ENCODE measurements at regions of chr14 and their contacts with region 1.

Region 1: DNA sequence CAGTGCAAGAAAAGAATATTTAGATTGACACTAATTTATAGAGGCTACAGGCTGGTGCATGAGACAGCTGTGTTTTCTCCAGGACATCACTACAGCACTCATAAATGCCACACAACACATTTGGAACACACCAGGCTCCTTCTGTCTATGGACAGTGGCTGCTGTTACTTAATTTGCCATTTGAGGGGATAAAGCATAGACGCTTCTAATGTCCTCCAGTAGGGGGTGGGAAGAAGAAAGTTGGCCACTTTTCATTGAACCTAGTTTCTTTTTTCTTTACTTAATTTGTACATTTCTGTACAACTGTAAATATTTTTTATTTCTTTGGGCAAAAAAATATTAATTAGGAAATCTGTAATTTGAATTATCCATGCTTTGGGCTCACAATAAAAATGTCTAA is 12.4 kb upstream of the RTN1 start:
- DNase-seq: no peak
- ATAC-seq: no peak
- H3K4me3 ChIP-seq: no peak overlapping the region
- H3K4me3 Mint-ChIP-seq: no peak overlapping the region
- H3K27ac ChIP-seq: no peak overlapping the region
- H3K27ac Mint-ChIP-seq: no peak overlapping the region
- H3K4me1 ChIP-seq: no peaks in the 10 kb centered on the region
- H3K4me1 Mint-ChIP-seq: no peaks in the 10 kb centered on the region
- H3K27me3 ChIP-seq: peaks cover 0 to 5% of the 10 kb centered on the region in 2 experiments
- H3K27me3 Mint-ChIP-seq: peaks cover 23% of the 10 kb centered on the region
- CTCF ChIP-seq: no peak

Region 2: DNA sequence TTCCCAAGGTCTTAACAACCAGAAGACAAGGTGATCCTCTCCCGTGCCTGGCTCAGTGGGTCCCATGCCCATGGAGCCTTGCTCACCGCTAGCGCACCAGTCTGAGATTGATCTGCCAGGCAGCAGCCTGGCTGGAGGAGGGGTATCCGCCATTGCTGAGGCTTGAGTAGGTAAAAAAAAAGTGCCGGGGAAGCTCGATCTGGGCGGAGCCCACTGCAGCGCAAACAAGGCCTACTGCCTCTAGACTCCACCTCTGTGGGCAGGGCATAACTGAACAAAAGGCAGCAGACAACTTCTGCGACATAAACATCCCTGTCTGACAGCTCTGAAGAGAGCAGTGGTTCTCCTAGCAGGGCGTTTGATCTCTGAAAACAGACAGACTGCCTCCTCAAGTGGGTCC is 499.0 kb after region 1 on chr14:
- CTCF ChIA-PET with region 1: no interaction called
- POLR2A ChIA-PET with region 1: no interaction called
- intact Hi-C with region 1: loop called in 1 of 2 experiments (anchors 10 kb)
- DNase-seq: no peak
- ATAC-seq: no peak
- H3K4me3 ChIP-seq: no peak overlapping the region
- H3K4me3 Mint-ChIP-seq: no peak overlapping the region
- H3K27ac ChIP-seq: no peak overlapping the region
- H3K27ac Mint-ChIP-seq: no peak overlapping the region
- H3K4me1 ChIP-seq: no peaks in the 10 kb centered on the region
- H3K4me1 Mint-ChIP-seq: no peaks in the 10 kb centered on the region
- H3K27me3 ChIP-seq: peaks cover 0 to 2% of the 10 kb centered on the region in 2 experiments
- H3K27me3 Mint-ChIP-seq: peaks cover 15% of the 10 kb centered on the region
- CTCF ChIP-seq: no peak

Measured in CD8-positive, alpha-beta T cell (primary cell).